Psoas muscle (tissue), 8 donors: ENCODE measurements at regions of chr2 and their contacts with region 1.

Region 1: DNA sequence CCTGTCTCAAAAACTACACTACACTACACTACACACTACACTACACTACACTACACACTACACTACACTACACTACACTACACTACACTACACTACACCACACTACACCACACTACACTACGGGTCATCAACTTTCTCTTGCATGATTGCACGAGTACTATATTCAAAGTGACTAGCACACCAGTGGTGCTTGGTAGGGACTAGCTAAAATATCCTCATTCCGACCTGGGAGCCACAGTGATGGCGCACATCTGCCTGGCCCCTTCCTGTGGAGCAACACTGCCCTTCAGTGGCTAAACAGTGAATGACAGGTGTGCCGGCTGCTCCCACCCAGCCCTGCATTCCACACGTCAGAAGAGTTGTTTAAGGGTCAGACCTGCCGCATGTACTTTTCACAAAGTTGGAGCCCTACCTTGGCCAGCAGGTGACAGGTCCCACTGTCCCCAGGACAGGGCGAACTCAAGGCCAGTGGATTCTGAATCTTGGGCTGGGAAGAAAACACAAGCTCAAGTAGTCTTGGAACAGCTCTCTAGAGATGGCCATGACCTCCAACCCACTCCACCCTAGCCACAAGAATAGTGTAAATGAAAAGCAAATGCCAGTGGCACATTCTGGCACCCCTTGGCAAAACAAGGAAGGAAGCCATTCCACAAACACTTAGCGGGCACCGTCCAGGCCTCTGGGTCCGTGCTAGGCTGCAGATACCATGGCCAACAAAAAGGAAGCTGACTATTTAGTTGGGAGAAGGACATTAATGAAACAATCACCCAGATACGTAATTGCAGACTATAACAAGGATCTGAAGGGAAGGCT is 79.7 kb upstream of the MSH2 start:
- DNase-seq: peak; percentile 65 to 85
- ATAC-seq: peak; percentile 88 to 97 (median 95)
- H3K4me3 ChIP-seq: no peak overlapping the region
- H3K27ac ChIP-seq: no peak overlapping the region
- H3K4me1 ChIP-seq: peaks cover 12% of the 10 kb centered on the region
- H3K27me3 ChIP-seq: no peaks in the 10 kb centered on the region
- CTCF ChIP-seq: peak; percentile 99

Region 2: GRCh38 chr2:46650556-46651001 is 672.6 kb before region 1 on chr2:
- intact Hi-C with region 1: loop called in 1 of 2 experiments (anchors 10 kb)
- DNase-seq: no peak
- ATAC-seq: peak; percentile 77 to 94 (median 84)
- H3K4me3 ChIP-seq: no peak overlapping the region
- H3K27ac ChIP-seq: no peak overlapping the region
- H3K4me1 ChIP-seq: peaks cover 4% of the 10 kb centered on the region
- H3K27me3 ChIP-seq: no peaks in the 10 kb centered on the region
- CTCF ChIP-seq: peak; percentile 96

Region 3: DNA sequence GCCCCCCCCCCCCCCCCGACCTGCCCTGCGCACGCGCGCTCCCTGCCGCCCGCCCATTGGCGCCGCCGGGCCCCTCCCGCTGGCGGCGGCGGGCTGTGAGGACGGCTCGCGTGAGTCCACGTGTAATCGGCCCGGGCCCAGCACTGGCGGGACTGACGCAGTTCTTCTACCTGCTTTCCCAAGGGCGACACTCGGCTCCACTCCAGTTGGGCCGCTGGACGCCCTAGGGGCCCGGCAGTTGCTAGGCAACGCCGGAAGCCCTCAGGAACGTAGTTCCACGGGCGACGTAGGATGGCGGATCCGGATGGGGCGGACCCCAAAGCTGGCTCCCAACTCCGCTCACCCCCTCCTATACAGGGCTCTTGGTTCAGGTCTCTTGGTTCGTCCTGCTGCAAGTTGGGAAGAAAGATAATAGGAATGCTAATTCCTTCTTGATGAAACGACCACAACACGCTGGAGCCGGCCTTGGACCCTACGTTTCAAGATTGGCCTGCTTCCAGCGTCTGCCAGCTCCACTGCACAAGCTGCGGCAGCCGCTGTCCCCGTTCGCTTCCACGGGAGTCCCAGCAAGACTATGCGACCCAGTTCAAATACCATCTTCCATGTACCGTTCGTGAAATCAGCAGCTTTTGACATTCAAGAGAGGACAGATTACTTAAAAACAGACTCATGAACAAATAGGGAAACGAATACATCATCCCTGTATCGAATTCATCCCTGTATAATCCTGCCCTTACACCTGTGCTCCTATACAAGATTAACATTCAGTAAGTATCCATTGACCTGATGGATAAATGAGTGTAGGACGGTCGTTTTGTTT is 407.2 kb before region 1 on chr2:
- intact Hi-C with region 1: loop called in 1 of 2 experiments (anchors 5 kb)
- DNase-seq: peak; percentile 97 to 99
- ATAC-seq: peak; percentile 87 to 90 (median 88)
- H3K4me3 ChIP-seq: peak overlapping the region; percentile 82
- H3K27ac ChIP-seq: peak overlapping the region; percentile 91
- H3K4me1 ChIP-seq: peaks cover 25% of the 10 kb centered on the region
- H3K27me3 ChIP-seq: no peaks in the 10 kb centered on the region
- CTCF ChIP-seq: no peak

Region 4: GRCh38 chr2:47180531-47180930 is 142.7 kb before region 1 on chr2:
- intact Hi-C with region 1: loop called in 1 of 2 experiments (anchors 2 kb)
- DNase-seq: no peak
- ATAC-seq: no peak
- H3K4me3 ChIP-seq: no peak overlapping the region
- H3K27ac ChIP-seq: no peak overlapping the region
- H3K4me1 ChIP-seq: no peaks in the 10 kb centered on the region
- H3K27me3 ChIP-seq: no peaks in the 10 kb centered on the region
- CTCF ChIP-seq: no peak

Region 5: GRCh38 chr2:47225061-47225859 is 98.0 kb before region 1 on chr2:
- intact Hi-C with region 1: loop called in 1 of 2 experiments (anchors 5 kb)
- DNase-seq: peak; percentile 83 to 94
- ATAC-seq: peak; percentile 96 to 99 (median 98)
- H3K4me3 ChIP-seq: no peak overlapping the region
- H3K27ac ChIP-seq: peak overlapping the region; percentile 70
- H3K4me1 ChIP-seq: peaks cover 45% of the 10 kb centered on the region
- H3K27me3 ChIP-seq: no peaks in the 10 kb centered on the region
- CTCF ChIP-seq: no peak

Region 6: DNA sequence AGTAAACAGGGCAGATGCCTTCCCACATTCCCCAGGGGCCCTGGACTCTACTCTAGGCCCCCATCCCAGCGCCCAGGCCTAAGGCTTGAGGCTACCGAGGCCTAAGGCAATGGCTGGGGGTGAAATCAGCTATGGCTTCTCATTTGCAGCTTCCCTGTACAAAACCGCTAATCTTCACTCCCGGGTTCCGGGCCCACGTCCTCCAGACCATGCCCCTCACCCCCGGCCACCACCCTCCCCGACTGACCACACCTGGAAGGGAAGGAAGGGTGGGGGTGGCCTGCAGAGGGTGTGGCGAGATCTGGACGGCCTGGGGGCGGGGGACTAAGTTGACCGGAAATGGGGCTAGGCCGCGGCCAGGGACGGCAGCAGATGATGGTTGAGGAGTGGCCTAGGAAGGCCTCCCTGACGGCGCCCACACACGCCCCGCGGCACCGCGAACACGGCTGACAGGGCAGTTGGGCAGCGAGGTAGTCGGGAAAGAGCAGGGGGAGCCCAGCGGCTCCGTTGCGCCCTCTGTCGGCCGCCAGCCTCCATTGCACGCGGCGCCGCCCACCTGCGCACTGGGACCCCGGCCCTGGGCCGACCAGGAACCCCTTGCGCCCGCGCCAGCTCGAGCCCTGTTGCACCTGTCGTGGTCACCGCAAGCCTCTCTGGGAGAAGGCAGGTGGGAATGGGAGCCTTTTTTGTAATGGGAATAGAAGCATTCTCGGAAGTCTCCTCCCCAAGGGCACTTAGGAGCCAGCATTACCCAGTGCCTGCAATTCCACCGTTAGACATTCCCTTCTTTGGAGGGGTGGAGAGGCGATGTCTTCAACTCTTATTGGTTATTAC is 51.0 kb before region 1 on chr2:
- intact Hi-C with region 1: loop called in 1 of 2 experiments (anchors 5 kb)
- DNase-seq: peak; percentile 76 to 85
- ATAC-seq: peak; percentile 64 to 81 (median 75)
- H3K4me3 ChIP-seq: peak overlapping the region; percentile 49
- H3K27ac ChIP-seq: peak overlapping the region; percentile 95
- H3K4me1 ChIP-seq: peaks cover 34% of the 10 kb centered on the region
- H3K27me3 ChIP-seq: no peaks in the 10 kb centered on the region
- CTCF ChIP-seq: peak; percentile 100